Natural killer cell (primary cell): ENCODE measurements at regions of chr3 and their contacts with region 1.

Region 1: GRCh38 chr3:50971487-50971924 is 296.8 kb downstream of the DOCK3 start:
- DNase-seq: peak; percentile 44 to 86
- ATAC-seq: peak; percentile 94 to 98 (median 97)
- H3K4me3 ChIP-seq: no peak overlapping the region
- H3K4me3 Mint-ChIP-seq: no peak overlapping the region
- H3K27ac ChIP-seq: no peak overlapping the region
- H3K27ac Mint-ChIP-seq: no peak overlapping the region
- H3K4me1 ChIP-seq: peaks cover 13% of the 10 kb centered on the region
- H3K4me1 Mint-ChIP-seq: peaks cover 17 to 21% of the 10 kb centered on the region in 2 donors
- H3K27me3 ChIP-seq: no peaks in the 10 kb centered on the region
- H3K27me3 Mint-ChIP-seq: peaks cover 0 to under 1% of the 10 kb centered on the region in 2 donors
- CTCF ChIP-seq: peak; percentile 94

Region 2: GRCh38 chr3:50358911-50359759 is 612.4 kb before region 1 on chr3 and contains the start of gene TMEM115:
- intact Hi-C with region 1: no loop called
- DNase-seq: peak; percentile 86 to 98
- ATAC-seq: peak; percentile 100
- H3K4me3 ChIP-seq: peak within 1 kb of the TSS; percentile 76
- H3K4me3 Mint-ChIP-seq: peak within 1 kb of the TSS; percentile 99
- H3K27ac ChIP-seq: peak within 1 kb of the TSS; percentile 70
- H3K27ac Mint-ChIP-seq: peak within 1 kb of the TSS; percentile 92 to 96
- H3K4me1 ChIP-seq: peaks cover 46% of the 10 kb centered on the region
- H3K4me1 Mint-ChIP-seq: peaks cover 30 to 49% of the 10 kb centered on the region in 2 donors
- H3K27me3 ChIP-seq: no peaks in the 10 kb centered on the region
- H3K27me3 Mint-ChIP-seq: no peaks in the 10 kb centered on the region
- CTCF ChIP-seq: no peak
- total RNA-seq, gene TMEM115: 15.3 to 24.3 (median 22.7) TPM

Region 3: GRCh38 chr3:50572158-50572557 is 399.3 kb before region 1 on chr3:
- intact Hi-C with region 1: loop called (anchors 2 kb)
- DNase-seq: peak; percentile 77 to 91
- ATAC-seq: peak; percentile 29 to 53 (median 32)
- H3K4me3 ChIP-seq: no peak overlapping the region
- H3K4me3 Mint-ChIP-seq: peak overlapping the region; percentile 58
- H3K27ac ChIP-seq: peak overlapping the region; percentile 53
- H3K27ac Mint-ChIP-seq: peak overlapping the region; percentile 88 to 95
- H3K4me1 ChIP-seq: peaks cover 89% of the 10 kb centered on the region
- H3K4me1 Mint-ChIP-seq: peaks cover 52 to 81% of the 10 kb centered on the region in 2 donors
- H3K27me3 ChIP-seq: no peaks in the 10 kb centered on the region
- H3K27me3 Mint-ChIP-seq: no peaks in the 10 kb centered on the region
- CTCF ChIP-seq: peak; percentile 85

Region 4: DNA sequence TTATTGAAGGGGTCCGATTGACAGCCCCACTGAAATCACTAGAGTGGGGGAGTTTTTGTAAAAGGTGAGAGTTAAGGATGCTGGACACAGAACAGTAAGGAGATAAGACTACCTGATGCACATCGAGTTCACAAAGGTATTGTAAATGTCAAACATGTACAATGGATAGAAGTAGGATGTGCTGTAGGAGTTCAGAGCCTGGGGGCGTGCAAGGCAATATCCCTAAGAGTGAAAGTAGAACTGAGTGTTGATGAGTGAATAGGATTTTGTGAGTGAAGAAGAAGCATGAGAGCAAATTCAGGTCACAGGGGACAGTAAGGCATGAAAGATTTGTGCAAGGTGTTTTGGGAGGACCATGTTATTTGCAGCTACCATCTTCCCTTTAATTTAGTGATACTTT is 275.2 kb before region 1 on chr3:
- intact Hi-C with region 1: no loop called
- DNase-seq: no peak
- ATAC-seq: no peak
- H3K4me3 ChIP-seq: no peak overlapping the region
- H3K4me3 Mint-ChIP-seq: no peak overlapping the region
- H3K27ac ChIP-seq: no peak overlapping the region
- H3K27ac Mint-ChIP-seq: no peak overlapping the region
- H3K4me1 ChIP-seq: no peaks in the 10 kb centered on the region
- H3K4me1 Mint-ChIP-seq: peaks cover 0 to 5% of the 10 kb centered on the region in 2 donors
- H3K27me3 ChIP-seq: no peaks in the 10 kb centered on the region
- H3K27me3 Mint-ChIP-seq: peaks cover 6 to 12% of the 10 kb centered on the region in 2 donors
- CTCF ChIP-seq: no peak

Region 5: DNA sequence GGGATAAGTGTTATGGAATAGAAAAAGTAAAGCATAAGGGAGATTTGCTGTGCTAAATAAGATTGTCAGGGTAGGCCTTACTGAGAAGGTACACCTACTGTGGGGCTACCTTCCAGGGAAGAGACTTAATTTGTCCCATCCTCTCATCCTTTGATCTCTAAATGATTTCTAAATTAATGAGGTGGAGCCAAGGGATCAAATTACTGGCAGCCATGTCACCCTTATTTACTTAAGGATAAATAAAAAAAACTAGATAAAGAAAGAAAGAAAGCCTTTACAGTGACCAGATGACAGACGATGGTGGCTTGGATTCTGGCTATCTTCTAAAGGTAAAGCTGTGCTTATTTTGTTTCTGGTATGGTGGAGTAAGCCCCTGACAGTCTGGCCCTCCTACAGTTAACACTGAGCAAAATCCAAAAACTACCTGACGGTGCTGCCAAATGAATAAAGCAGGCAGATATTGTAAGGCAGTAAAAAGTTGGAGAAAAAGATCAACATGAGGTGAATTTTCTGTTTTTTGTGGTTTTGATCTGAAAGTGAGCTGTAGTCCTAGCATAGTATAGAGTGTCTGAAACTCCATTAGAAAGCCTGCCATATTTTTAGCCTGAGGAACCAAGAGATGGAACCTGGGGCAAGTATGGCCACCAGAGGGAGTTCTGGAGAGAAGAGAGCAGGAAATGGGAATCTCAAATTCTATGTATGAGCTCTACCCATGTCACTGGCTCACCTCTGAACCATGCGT is 128.5 kb after region 1 on chr3:
- intact Hi-C with region 1: loop called (anchors 10 kb)
- DNase-seq: peak in 1 of 2 donors; percentile 35
- ATAC-seq: no peak
- H3K4me3 ChIP-seq: no peak overlapping the region
- H3K4me3 Mint-ChIP-seq: no peak overlapping the region
- H3K27ac ChIP-seq: no peak overlapping the region
- H3K27ac Mint-ChIP-seq: no peak overlapping the region
- H3K4me1 ChIP-seq: no peaks in the 10 kb centered on the region
- H3K4me1 Mint-ChIP-seq: peaks cover 0 to 6% of the 10 kb centered on the region in 2 donors
- H3K27me3 ChIP-seq: no peaks in the 10 kb centered on the region
- H3K27me3 Mint-ChIP-seq: peaks cover 8 to 12% of the 10 kb centered on the region in 2 donors
- CTCF ChIP-seq: no peak

Region 6: GRCh38 chr3:51191756-51192155 is 220.2 kb after region 1 on chr3:
- intact Hi-C with region 1: loop called (anchors 1 kb)
- DNase-seq: no peak
- ATAC-seq: no peak
- H3K4me3 ChIP-seq: no peak overlapping the region
- H3K4me3 Mint-ChIP-seq: no peak overlapping the region
- H3K27ac ChIP-seq: no peak overlapping the region
- H3K27ac Mint-ChIP-seq: no peak overlapping the region
- H3K4me1 ChIP-seq: no peaks in the 10 kb centered on the region
- H3K4me1 Mint-ChIP-seq: no peaks in the 10 kb centered on the region
- H3K27me3 ChIP-seq: no peaks in the 10 kb centered on the region
- H3K27me3 Mint-ChIP-seq: peaks cover 0 to 7% of the 10 kb centered on the region in 2 donors
- CTCF ChIP-seq: no peak

Region 7: GRCh38 chr3:51311055-51311454 is 339.5 kb after region 1 on chr3:
- intact Hi-C with region 1: loop called (anchors 1 kb)
- DNase-seq: peak in 1 of 2 donors; percentile 58
- ATAC-seq: no peak
- H3K4me3 ChIP-seq: no peak overlapping the region
- H3K4me3 Mint-ChIP-seq: no peak overlapping the region
- H3K27ac ChIP-seq: no peak overlapping the region
- H3K27ac Mint-ChIP-seq: no peak overlapping the region
- H3K4me1 ChIP-seq: no peaks in the 10 kb centered on the region
- H3K4me1 Mint-ChIP-seq: no peaks in the 10 kb centered on the region
- H3K27me3 ChIP-seq: no peaks in the 10 kb centered on the region
- H3K27me3 Mint-ChIP-seq: peaks cover 6 to 7% of the 10 kb centered on the region in 2 donors
- CTCF ChIP-seq: peak; percentile 25

Region 8: DNA sequence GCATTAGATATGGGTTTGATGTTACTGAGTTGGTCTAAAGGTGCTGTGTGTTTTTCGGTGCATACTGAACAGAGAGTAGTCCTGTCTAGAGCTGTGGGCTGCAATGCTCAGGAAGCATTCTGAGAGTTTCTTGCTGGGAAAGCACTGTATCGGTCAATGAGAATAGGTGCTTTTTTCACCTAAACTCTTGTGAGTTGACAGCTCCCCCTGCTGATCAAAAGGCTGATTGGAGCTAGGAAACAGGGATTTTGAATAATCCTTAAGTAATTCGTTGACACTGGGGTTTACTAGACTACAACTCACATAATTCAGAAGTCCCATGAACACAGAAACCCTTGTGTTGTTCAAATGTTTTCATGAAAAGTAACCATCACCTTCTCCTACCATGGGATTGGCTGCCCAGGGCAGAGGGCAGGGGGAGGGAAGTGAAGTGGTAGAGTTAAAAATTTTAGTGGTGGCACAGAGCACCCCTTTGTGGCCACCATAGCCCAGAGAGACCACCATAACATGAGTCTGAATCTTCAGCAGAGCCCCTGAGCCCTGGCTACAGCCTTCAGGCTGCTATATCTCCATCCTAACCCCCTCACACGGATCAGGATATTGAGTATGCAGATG is 400.5 kb after region 1 on chr3:
- intact Hi-C with region 1: loop called (anchors 1 kb)
- DNase-seq: peak in 1 of 2 donors; percentile 78
- ATAC-seq: peak in 2 of 3 donors; percentile 66
- H3K4me3 ChIP-seq: no peak overlapping the region
- H3K4me3 Mint-ChIP-seq: no peak overlapping the region
- H3K27ac ChIP-seq: no peak overlapping the region
- H3K27ac Mint-ChIP-seq: no peak overlapping the region
- H3K4me1 ChIP-seq: no peaks in the 10 kb centered on the region
- H3K4me1 Mint-ChIP-seq: no peaks in the 10 kb centered on the region
- H3K27me3 ChIP-seq: no peaks in the 10 kb centered on the region
- H3K27me3 Mint-ChIP-seq: peaks cover 0 to 6% of the 10 kb centered on the region in 2 donors
- CTCF ChIP-seq: peak; percentile 67

Region 9: DNA sequence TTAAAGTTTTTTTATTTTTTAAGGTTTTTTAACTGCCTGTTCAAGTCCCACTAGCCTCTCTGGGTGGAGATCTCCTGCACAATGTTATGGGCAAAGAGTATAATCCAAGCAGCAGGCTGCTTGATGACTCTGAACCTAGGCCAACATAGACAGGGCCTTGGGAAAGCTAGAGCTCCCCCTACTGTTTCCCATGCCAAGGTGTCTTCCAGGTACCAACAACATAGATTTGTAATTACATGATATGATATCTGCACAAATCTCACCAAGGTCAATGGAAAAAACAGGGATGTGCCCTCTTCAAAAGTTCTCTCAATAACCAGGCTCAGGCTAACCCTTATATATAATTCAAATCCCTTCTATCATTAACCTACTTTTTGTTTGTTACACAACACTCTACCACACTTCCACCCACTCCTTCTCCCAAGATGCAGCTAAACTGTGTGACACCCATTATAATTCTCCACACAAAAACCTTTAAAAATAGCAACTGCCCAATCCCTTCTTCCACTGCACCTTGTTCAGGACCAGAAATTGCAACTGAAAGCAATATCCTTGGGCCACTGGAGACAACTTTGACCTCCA is 463.3 kb after region 1 on chr3:
- intact Hi-C with region 1: loop called (anchors 5 kb)
- DNase-seq: peak in 1 of 2 donors; percentile 78
- ATAC-seq: peak; percentile 79 to 88 (median 86)
- H3K4me3 ChIP-seq: no peak overlapping the region
- H3K4me3 Mint-ChIP-seq: no peak overlapping the region
- H3K27ac ChIP-seq: no peak overlapping the region
- H3K27ac Mint-ChIP-seq: peak overlapping the region in 1 of 2 donors; percentile 12
- H3K4me1 ChIP-seq: no peaks in the 10 kb centered on the region
- H3K4me1 Mint-ChIP-seq: peaks cover 5 to 8% of the 10 kb centered on the region in 2 donors
- H3K27me3 ChIP-seq: no peaks in the 10 kb centered on the region
- H3K27me3 Mint-ChIP-seq: no peaks in the 10 kb centered on the region
- CTCF ChIP-seq: peak; percentile 70